Right ventricle myocardium superior (tissue), 1 donor: ENCODE measurements at regions of chr16 and their contacts with region 1.

Region 1: GRCh38 chr16:1194665-1195392 is 30.2 kb downstream of the TPSG1 start:
- DNase-seq: no peak
- ATAC-seq: peak; percentile 56

Region 2: GRCh38 chr16:1105888-1106620 is 88.8 kb before region 1 on chr16:
- intact Hi-C with region 1: loop called (anchors 2 kb)
- DNase-seq: peak; percentile 68
- ATAC-seq: peak; percentile 76